ENCODE measurements at regions of chr10 and their contacts with region 1.

Region 1: GRCh38 chr10:17737027-17737965 is 14.7 kb upstream of the TMEM236 start:
- DNase-seq: peak; percentile 11
- H3K4me3 ChIP-seq: no peak overlapping the region
- H3K27ac ChIP-seq: no peak overlapping the region
- H3K4me1 ChIP-seq: no peaks in the 10 kb centered on the region
- H3K27me3 ChIP-seq: no peaks in the 10 kb centered on the region
- CTCF ChIP-seq: peak; percentile 55 to 66

Region 2: GRCh38 chr10:17637869-17638268 is 99.4 kb before region 1 on chr10:
- CTCF ChIA-PET with region 1: no interaction called
- dilution Hi-C with region 1: loop called (anchors 5 kb)
- in situ Hi-C with region 1: no loop called
- intact Hi-C with region 1: no loop called
- DNase-seq: no peak
- H3K4me3 ChIP-seq: no peak overlapping the region
- H3K27ac ChIP-seq: no peak overlapping the region
- H3K4me1 ChIP-seq: peaks cover 7% of the 10 kb centered on the region
- H3K27me3 ChIP-seq: no peaks in the 10 kb centered on the region
- CTCF ChIP-seq: no peak

Region 3: DNA sequence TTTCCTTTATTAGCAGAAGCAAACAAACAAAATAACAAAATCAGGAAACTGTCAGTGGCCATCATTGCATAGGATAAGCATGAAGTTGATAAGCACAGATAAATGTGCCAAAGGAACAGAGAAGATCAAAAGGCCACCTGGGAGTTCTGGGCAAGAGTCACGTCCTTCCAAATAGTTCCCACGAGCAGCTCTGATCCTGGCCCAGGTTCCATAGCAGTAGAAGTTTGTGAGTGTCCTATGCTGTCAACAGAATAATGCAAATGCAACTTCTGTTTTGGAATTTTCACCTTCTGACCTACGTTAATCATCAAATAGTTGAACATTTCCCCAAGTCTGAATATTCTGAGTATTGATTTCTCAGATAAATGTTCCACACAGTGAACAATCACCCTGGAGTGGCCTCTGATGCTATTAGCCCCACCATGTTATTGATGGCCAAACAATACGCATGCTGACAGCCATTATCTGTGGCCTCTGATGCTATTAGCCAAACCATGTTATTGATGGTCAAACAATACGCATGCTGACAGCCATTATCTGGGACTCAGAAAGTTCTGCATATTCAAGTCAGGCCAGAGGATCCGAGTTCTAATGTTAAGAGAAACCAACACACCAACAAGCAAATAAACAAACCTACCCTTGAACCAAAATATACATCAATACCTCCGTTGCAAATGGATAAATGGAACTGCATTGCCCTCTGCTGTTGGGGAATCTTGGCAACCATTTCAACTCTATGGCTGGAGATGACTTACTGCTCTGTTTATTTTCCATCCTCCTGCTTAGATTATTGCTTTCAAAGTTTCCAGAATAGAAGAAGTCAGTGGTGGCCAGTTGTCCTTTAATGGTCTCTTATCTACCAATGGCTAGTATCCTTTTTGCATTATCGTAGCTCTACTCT is 135.1 kb after region 1 on chr10:
- CTCF ChIA-PET with region 1: no interaction called
- dilution Hi-C with region 1: no loop called
- in situ Hi-C with region 1: no loop called
- intact Hi-C with region 1: loop called (anchors 5 kb)
- DNase-seq: peak; percentile 8
- H3K4me3 ChIP-seq: no peak overlapping the region
- H3K27ac ChIP-seq: no peak overlapping the region
- H3K4me1 ChIP-seq: no peaks in the 10 kb centered on the region
- H3K27me3 ChIP-seq: no peaks in the 10 kb centered on the region
- CTCF ChIP-seq: peak; percentile 36 to 59

Region 4: DNA sequence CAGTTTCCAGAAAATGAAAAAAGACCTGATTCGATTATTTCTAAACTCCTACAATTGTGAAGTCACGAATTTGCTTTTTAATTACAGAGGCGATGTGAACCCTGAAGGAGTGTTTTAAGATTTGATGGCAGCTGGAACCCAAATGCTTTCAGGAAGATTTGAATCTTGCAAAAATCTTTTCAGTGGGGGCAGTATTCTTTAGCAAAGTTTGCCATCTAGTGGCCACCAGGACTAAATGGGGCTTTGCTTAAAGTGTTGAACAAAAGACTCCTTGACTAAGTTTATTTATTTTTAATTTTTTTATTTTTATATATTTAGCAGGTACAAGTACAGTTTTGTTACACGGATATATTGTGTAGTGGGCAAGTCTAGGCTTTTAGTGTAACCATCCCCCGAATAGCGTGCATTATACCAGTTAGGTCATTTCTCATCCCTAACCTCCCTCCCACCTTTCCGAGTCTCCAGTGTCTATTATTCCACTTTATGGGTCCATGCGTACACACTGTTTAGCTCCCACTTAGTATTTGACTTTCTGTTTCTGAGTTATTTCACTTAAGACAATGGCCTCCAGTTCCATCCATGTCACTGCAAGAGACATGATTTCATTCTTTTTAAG is 501.7 kb after region 1 on chr10:
- CTCF ChIA-PET with region 1: no interaction called
- dilution Hi-C with region 1: no loop called
- in situ Hi-C with region 1: no loop called
- intact Hi-C with region 1: loop called (anchors 5 kb)
- DNase-seq: peak; percentile 20
- H3K4me3 ChIP-seq: no peak overlapping the region
- H3K27ac ChIP-seq: no peak overlapping the region
- H3K4me1 ChIP-seq: no peaks in the 10 kb centered on the region
- H3K27me3 ChIP-seq: no peaks in the 10 kb centered on the region
- CTCF ChIP-seq: peak; percentile 51 to 60

Measured in mammary epithelial cell (primary cell).